ENCODE measurements at regions of chr13 and their contacts with region 1.

Region 1: GRCh38 chr13:46603165-46603603 is 50.2 kb downstream of the LRCH1 start:
- DNase-seq: peak; percentile 53
- H3K4me3 ChIP-seq: no peak overlapping the region
- H3K27ac ChIP-seq: peak overlapping the region; percentile 9
- H3K4me1 ChIP-seq: peaks cover 93% of the 10 kb centered on the region
- CTCF ChIP-seq: peak; percentile 80

Region 2: GRCh38 chr13:46721054-46721453 is 117.9 kb after region 1 on chr13:
- CTCF ChIA-PET with region 1: no interaction called
- POLR2A ChIA-PET with region 1: no interaction called
- intact Hi-C with region 1: loop called (anchors 2 kb)
- DNase-seq: peak; percentile 62
- H3K4me3 ChIP-seq: no peak overlapping the region
- H3K27ac ChIP-seq: no peak overlapping the region
- H3K4me1 ChIP-seq: peaks cover 9% of the 10 kb centered on the region
- CTCF ChIP-seq: peak; percentile 90

Measured in OCI-LY7 (cell line).